B cell (primary cell): ENCODE measurements at regions of chr6 and their contacts with region 1.

Region 1: GRCh38 chr6:37791156-37791919 is 28.2 kb upstream of the ZFAND3 start:
- DNase-seq: peak; percentile 72
- ATAC-seq: peak; percentile 100
- H3K4me3 ChIP-seq: no peak overlapping the region
- H3K4me3 Mint-ChIP-seq: no peak overlapping the region
- H3K27ac ChIP-seq: no peak overlapping the region
- H3K27ac Mint-ChIP-seq: peak overlapping the region; percentile 17
- H3K4me1 ChIP-seq: peaks cover 0 to 3% of the 10 kb centered on the region in 2 donors
- H3K4me1 Mint-ChIP-seq: peaks cover 6% of the 10 kb centered on the region
- H3K27me3 ChIP-seq: no peaks in the 10 kb centered on the region
- H3K27me3 Mint-ChIP-seq: peaks cover 7% of the 10 kb centered on the region
- CTCF ChIP-seq: peak; percentile 88

Region 2: GRCh38 chr6:37705239-37706051 is 85.9 kb before region 1 on chr6:
- CTCF ChIA-PET with region 1: interaction called, 3 read pairs
- POLR2A ChIA-PET with region 1: no interaction called
- intact Hi-C with region 1: loop called (anchors 1 kb)
- DNase-seq: peak; percentile 87
- ATAC-seq: peak; percentile 88
- H3K4me3 ChIP-seq: peak overlapping the region; percentile 3 to 69 (median 53)
- H3K4me3 Mint-ChIP-seq: peak overlapping the region; percentile 91
- H3K27ac ChIP-seq: peak overlapping the region; percentile 39 to 65
- H3K27ac Mint-ChIP-seq: peak overlapping the region; percentile 86
- H3K4me1 ChIP-seq: peaks cover 5 to 22% of the 10 kb centered on the region in 2 donors
- H3K4me1 Mint-ChIP-seq: peaks cover 26% of the 10 kb centered on the region
- H3K27me3 ChIP-seq: peaks cover 0 to 4% (median 0%) of the 10 kb centered on the region in 4 experiments
- H3K27me3 Mint-ChIP-seq: no peaks in the 10 kb centered on the region
- CTCF ChIP-seq: peak; percentile 83

Region 3: GRCh38 chr6:37860226-37860839 is 69.0 kb after region 1 on chr6:
- CTCF ChIA-PET with region 1: interaction called, 4 read pairs
- POLR2A ChIA-PET with region 1: no interaction called
- intact Hi-C with region 1: loop called (anchors 1 kb)
- DNase-seq: peak; percentile 54
- ATAC-seq: no peak
- H3K4me3 ChIP-seq: no peak overlapping the region
- H3K4me3 Mint-ChIP-seq: no peak overlapping the region
- H3K27ac ChIP-seq: no peak overlapping the region
- H3K27ac Mint-ChIP-seq: no peak overlapping the region
- H3K4me1 ChIP-seq: peaks cover 0 to 7% of the 10 kb centered on the region in 2 donors
- H3K4me1 Mint-ChIP-seq: peaks cover 51% of the 10 kb centered on the region
- H3K27me3 ChIP-seq: no peaks in the 10 kb centered on the region
- H3K27me3 Mint-ChIP-seq: no peaks in the 10 kb centered on the region
- CTCF ChIP-seq: peak; percentile 62

Region 4: GRCh38 chr6:38051819-38052434 is 260.6 kb after region 1 on chr6:
- CTCF ChIA-PET with region 1: no interaction called
- POLR2A ChIA-PET with region 1: no interaction called
- intact Hi-C with region 1: no loop called
- DNase-seq: no peak
- ATAC-seq: no peak
- H3K4me3 ChIP-seq: no peak overlapping the region
- H3K4me3 Mint-ChIP-seq: no peak overlapping the region
- H3K27ac ChIP-seq: no peak overlapping the region
- H3K27ac Mint-ChIP-seq: no peak overlapping the region
- H3K4me1 ChIP-seq: no peaks in the 10 kb centered on the region
- H3K4me1 Mint-ChIP-seq: peaks cover 20% of the 10 kb centered on the region
- H3K27me3 ChIP-seq: no peaks in the 10 kb centered on the region
- H3K27me3 Mint-ChIP-seq: no peaks in the 10 kb centered on the region
- CTCF ChIP-seq: no peak

Region 5: GRCh38 chr6:38161754-38162492 is 370.6 kb after region 1 on chr6:
- CTCF ChIA-PET with region 1: no interaction called
- POLR2A ChIA-PET with region 1: no interaction called
- intact Hi-C with region 1: no loop called
- DNase-seq: no peak
- ATAC-seq: no peak
- H3K4me3 ChIP-seq: no peak overlapping the region
- H3K4me3 Mint-ChIP-seq: no peak overlapping the region
- H3K27ac ChIP-seq: no peak overlapping the region
- H3K27ac Mint-ChIP-seq: peak overlapping the region; percentile 3
- H3K4me1 ChIP-seq: no peaks in the 10 kb centered on the region
- H3K4me1 Mint-ChIP-seq: no peaks in the 10 kb centered on the region
- H3K27me3 ChIP-seq: no peaks in the 10 kb centered on the region
- H3K27me3 Mint-ChIP-seq: no peaks in the 10 kb centered on the region
- CTCF ChIP-seq: no peak